Lower leg skin (tissue), 4 donors: ENCODE measurements at regions of chr18 and their contacts with region 1.

Region 1: GRCh38 chr18:55589625-55590291 is 1.8 kb upstream of the TCF4 start:
- DNase-seq: peak; percentile 97 to 99
- H3K4me3 ChIP-seq: peak overlapping the region; percentile 28
- CTCF ChIP-seq: no peak
- POLR2A ChIP-seq: peak in 1 of 2 donors; percentile 12

Region 2: GRCh38 chr18:55422456-55423180 is 167.1 kb before region 1 on chr18:
- intact Hi-C with region 1: loop called (anchors 5 kb)
- DNase-seq: peak in 1 of 2 donors; percentile 51
- H3K4me3 ChIP-seq: no peak overlapping the region
- CTCF ChIP-seq: no peak
- POLR2A ChIP-seq: no peak